ENCODE measurements at regions of chr11 and their contacts with region 1.

Region 1: GRCh38 chr11:86706321-86706720 is 33.9 kb upstream of the ME3 start:
- DNase-seq: peak; percentile 70 to 74
- H3K4me3 ChIP-seq: no peak overlapping the region
- H3K4me3 Mint-ChIP-seq: no peak overlapping the region
- H3K27ac Mint-ChIP-seq: peak overlapping the region; percentile 2
- H3K4me1 ChIP-seq: peaks cover 37% of the 10 kb centered on the region
- H3K4me1 Mint-ChIP-seq: peaks cover 45% of the 10 kb centered on the region
- H3K27me3 ChIP-seq: no peaks in the 10 kb centered on the region
- H3K27me3 Mint-ChIP-seq: no peaks in the 10 kb centered on the region
- CTCF ChIP-seq: no peak

Region 2: DNA sequence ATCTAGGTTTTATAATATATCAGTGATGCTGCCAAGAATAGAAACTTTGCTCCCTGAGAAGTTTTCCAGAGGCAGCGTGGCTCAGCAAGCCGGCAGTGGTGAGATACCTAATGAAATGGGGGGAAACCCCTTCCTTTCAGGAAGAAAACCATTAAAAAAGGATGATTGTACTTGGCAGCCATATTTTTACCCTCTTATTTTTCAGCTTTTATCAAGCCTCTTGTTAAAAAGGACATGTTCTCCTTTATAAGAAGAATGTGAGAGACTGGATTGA is 24.9 kb before region 1 on chr11:
- CTCF ChIA-PET with region 1: no interaction called
- POLR2A ChIA-PET with region 1: no interaction called
- intact Hi-C with region 1: no loop called
- DNase-seq: no peak
- H3K4me3 ChIP-seq: no peak overlapping the region
- H3K4me3 Mint-ChIP-seq: no peak overlapping the region
- H3K27ac Mint-ChIP-seq: no peak overlapping the region
- H3K4me1 ChIP-seq: peaks cover 18% of the 10 kb centered on the region
- H3K4me1 Mint-ChIP-seq: peaks cover 38% of the 10 kb centered on the region
- H3K27me3 ChIP-seq: no peaks in the 10 kb centered on the region
- H3K27me3 Mint-ChIP-seq: no peaks in the 10 kb centered on the region
- CTCF ChIP-seq: no peak

Region 3: DNA sequence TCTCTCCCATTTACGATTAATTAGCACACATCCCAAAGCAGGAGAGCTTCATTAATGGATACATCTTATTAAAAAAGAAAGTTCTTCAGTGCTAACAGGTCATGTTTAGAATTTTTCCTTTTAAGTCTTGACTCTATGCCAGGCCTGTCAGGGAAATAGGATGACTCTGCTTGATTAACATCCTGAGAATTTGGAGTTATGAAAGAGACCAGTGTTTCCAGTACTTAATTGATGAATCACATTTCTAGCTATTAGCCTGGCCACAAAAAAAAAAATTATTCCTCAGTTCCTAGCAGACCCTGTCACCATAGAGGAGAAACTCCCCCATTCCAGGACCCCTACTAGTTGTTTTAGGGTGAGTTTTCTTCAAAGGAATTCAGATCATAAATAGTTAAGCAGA is 10.3 kb before region 1 on chr11:
- CTCF ChIA-PET with region 1: no interaction called
- POLR2A ChIA-PET with region 1: no interaction called
- intact Hi-C with region 1: loop called (anchors 1 kb)
- DNase-seq: no peak
- H3K4me3 ChIP-seq: no peak overlapping the region
- H3K4me3 Mint-ChIP-seq: no peak overlapping the region
- H3K27ac Mint-ChIP-seq: no peak overlapping the region
- H3K4me1 ChIP-seq: peaks cover 31% of the 10 kb centered on the region
- H3K4me1 Mint-ChIP-seq: peaks cover 7% of the 10 kb centered on the region
- H3K27me3 ChIP-seq: no peaks in the 10 kb centered on the region
- H3K27me3 Mint-ChIP-seq: no peaks in the 10 kb centered on the region
- CTCF ChIP-seq: no peak

Region 4: GRCh38 chr11:86719781-86720463 is 13.6 kb after region 1 on chr11:
- CTCF ChIA-PET with region 1: interaction called, 3 read pairs
- POLR2A ChIA-PET with region 1: interaction called, 3 read pairs
- intact Hi-C with region 1: loop called (anchors 1 kb)
- DNase-seq: no peak
- H3K4me3 ChIP-seq: no peak overlapping the region
- H3K4me3 Mint-ChIP-seq: peak overlapping the region; percentile 2
- H3K27ac Mint-ChIP-seq: peak overlapping the region; percentile 81
- H3K4me1 ChIP-seq: peaks cover 47% of the 10 kb centered on the region
- H3K4me1 Mint-ChIP-seq: peaks cover 41% of the 10 kb centered on the region
- H3K27me3 ChIP-seq: no peaks in the 10 kb centered on the region
- H3K27me3 Mint-ChIP-seq: no peaks in the 10 kb centered on the region
- CTCF ChIP-seq: no peak

Region 5: DNA sequence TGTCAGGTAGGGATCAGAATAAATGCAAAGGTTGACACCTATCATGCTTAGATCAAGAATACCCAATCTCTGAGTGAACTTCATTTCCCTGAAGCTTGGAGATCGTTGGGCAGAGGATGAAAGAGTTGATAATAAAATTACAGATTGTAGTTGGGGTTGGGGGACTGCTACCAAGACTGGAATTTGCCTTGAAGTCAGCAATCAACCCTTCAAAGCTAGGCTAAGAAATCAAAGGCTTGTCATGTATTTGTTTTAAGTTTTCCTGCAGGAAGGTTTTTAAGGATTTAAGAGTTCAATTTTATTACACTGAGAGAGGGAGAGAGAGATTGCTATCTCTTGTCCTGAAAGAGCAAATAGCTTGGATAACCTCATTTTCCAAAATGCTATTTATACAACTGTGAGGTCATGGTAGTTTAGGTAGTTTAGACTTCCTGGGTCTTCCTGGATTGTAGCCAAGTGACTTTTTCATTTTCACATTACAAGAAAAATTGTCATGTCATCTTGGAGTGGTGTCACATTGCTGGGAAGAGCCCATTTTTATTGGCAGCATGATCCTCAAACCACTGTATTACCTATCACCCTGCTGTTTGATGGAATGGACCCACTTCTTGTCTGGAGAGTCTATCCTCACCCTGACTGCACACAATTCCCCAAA is 83.9 kb after region 1 on chr11:
- CTCF ChIA-PET with region 1: no interaction called
- POLR2A ChIA-PET with region 1: interaction called, 4 read pairs
- intact Hi-C with region 1: loop called (anchors 1 kb)
- DNase-seq: peak; percentile 65 to 72
- H3K4me3 ChIP-seq: no peak overlapping the region
- H3K4me3 Mint-ChIP-seq: peak overlapping the region; percentile 30
- H3K27ac Mint-ChIP-seq: peak overlapping the region; percentile 79
- H3K4me1 ChIP-seq: peaks cover 88% of the 10 kb centered on the region
- H3K4me1 Mint-ChIP-seq: peaks cover 75% of the 10 kb centered on the region
- H3K27me3 ChIP-seq: no peaks in the 10 kb centered on the region
- H3K27me3 Mint-ChIP-seq: no peaks in the 10 kb centered on the region
- CTCF ChIP-seq: no peak